Mammary epithelial cell (primary cell): ENCODE measurements at regions of chr14 and their contacts with region 1.

Region 1: DNA sequence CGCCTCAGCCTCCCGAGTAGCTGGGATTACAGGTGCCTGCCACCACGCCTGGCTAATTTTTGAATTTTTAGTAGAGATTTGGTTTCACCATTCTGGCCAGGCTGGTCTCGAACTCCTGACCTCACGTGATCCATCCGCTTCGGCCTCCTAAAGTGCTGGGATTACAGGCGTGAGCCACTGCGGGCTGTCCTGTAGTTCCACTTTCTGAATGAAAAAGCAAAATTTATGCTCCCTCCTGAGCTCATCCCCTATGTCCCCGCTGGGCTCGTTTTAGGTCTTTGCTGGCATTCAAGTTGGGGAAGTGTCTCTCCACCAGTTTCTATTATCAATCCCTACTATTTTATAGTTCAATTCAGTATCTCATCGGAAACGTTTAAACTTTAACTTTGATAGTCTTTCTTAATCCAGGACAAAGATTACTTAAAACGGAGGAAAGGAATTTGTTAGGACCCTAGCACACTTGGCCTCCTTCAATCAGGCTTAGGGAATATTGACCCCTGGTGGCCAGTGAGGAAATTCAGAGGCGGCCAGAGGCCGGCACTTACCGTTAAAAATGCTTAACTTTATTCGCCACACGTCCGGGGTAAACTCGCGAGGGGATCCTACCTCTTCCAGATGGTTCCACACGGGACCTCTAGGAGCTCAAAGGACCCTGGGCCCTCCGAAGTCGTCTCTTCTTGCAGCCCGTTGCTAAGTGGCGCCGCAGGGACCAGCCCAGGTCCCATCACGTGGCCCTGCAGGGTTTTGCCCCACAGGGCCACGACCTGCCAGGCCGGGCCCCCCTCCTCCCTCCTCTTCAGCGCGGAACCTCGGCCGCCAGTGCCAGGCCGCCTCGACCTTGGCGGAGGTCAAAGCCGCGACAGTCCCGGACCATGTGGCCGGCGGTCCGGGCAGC is 11.4 kb upstream of the DNAL1 start:
- DNase-seq: peak; percentile 46
- H3K4me3 ChIP-seq: peak overlapping the region; percentile 47 to 57 (median 53)
- H3K27ac ChIP-seq: no peak overlapping the region
- H3K4me1 ChIP-seq: peaks cover 13% of the 10 kb centered on the region
- H3K27me3 ChIP-seq: no peaks in the 10 kb centered on the region
- CTCF ChIP-seq: peak; percentile 86 to 91

Region 2: DNA sequence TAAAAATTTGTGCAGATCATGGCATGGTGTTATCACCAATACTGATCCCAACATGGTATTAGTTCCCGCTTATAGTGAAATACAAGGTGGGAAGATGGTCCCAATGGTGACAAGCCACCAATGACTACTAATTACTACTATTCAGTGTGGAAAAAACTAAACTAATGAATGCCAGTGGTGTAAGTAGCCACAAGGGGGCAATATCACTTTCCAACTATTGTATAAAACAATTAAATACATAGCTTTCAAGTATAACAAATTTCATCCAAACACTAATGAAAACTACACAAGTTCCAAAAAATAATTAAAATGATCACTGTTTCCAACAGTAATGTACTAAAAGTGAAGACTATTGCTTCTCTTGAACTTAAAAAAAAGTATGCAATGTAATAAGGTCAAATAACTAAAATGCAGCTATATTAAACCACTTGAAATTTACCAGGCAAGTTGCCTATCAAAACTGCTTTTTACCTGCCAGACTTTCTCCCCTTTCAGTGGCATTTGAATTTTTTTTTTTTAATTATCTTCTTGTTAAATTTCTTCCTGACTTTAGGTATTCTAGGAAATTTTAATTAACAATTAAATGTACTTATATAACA is 338.1 kb before region 1 on chr14:
- CTCF ChIA-PET with region 1: no interaction called
- dilution Hi-C with region 1: no loop called
- in situ Hi-C with region 1: loop called in 1 of 2 experiments (anchors 25 kb)
- intact Hi-C with region 1: loop called (anchors 1 kb)
- DNase-seq: peak; percentile 25
- H3K4me3 ChIP-seq: no peak overlapping the region
- H3K27ac ChIP-seq: no peak overlapping the region
- H3K4me1 ChIP-seq: no peaks in the 10 kb centered on the region
- H3K27me3 ChIP-seq: no peaks in the 10 kb centered on the region
- CTCF ChIP-seq: peak; percentile 66 to 82

Region 3: DNA sequence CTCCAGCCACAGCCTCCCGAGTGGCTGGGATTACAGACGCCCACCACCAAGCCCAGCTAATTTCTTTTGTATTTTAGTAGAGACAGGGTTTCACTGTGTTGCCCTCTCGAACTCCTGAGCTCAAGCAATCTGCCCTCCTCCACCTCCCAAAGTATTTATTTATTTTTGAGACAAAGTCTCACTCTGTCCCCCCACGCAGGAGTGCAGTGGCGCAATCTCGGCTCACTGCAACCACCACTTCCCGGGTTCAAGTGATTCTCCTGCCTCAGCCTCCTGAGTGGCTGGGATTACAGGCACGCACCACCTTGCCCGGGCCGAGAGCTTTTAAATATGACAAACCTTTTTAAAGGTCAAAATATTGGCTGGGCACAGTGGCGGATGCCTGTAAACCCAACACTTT is 189.6 kb before region 1 on chr14:
- CTCF ChIA-PET with region 1: no interaction called
- dilution Hi-C with region 1: no loop called
- in situ Hi-C with region 1: no loop called
- intact Hi-C with region 1: no loop called
- DNase-seq: no peak
- H3K4me3 ChIP-seq: no peak overlapping the region
- H3K27ac ChIP-seq: no peak overlapping the region
- H3K4me1 ChIP-seq: no peaks in the 10 kb centered on the region
- H3K27me3 ChIP-seq: no peaks in the 10 kb centered on the region
- CTCF ChIP-seq: no peak

Region 4: DNA sequence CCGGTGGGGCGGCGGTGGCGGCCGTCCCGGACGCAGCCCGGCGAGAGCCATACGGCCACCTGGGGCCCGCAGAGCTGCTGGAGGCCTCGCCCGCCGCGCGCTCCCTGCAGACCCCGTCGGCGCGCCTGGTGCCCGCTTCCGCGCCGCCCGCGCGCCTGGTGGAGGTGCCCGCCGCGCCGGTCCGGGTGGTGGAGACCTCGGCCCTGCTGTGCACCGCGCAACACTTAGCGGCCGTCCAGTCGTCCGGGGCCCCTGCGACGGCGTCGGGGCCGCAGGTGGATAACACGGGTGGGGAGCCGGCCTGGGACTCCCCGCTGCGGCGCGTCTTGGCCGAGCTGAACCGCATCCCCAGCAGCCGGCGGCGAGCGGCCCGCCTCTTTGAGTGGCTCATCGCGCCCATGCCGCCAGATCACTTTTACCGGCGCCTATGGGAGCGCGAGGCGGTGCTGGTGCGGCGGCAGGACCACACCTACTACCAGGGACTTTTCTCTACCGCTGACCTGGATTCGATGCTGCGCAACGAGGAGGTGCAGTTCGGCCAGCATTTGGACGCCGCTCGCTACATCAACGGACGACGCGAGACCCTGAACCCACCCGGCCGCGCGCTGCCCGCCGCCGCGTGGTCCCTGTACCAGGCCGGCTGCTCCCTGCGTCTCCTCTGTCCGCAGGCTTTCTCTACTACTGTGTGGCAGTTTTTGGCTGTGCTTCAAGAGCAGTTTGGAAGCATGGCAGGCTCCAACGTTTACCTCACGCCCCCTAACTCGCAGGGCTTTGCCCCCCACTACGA is 141.9 kb before region 1 on chr14:
- CTCF ChIA-PET with region 1: no interaction called
- dilution Hi-C with region 1: no loop called
- in situ Hi-C with region 1: no loop called
- intact Hi-C with region 1: loop called (anchors 5 kb)
- DNase-seq: peak; percentile 74
- H3K4me3 ChIP-seq: peak overlapping the region; percentile 72 to 80 (median 78)
- H3K27ac ChIP-seq: peak overlapping the region; percentile 70
- H3K4me1 ChIP-seq: peaks cover 30% of the 10 kb centered on the region
- H3K27me3 ChIP-seq: no peaks in the 10 kb centered on the region
- CTCF ChIP-seq: no peak

Region 5: GRCh38 chr14:73568381-73568781 is 65.0 kb before region 1 on chr14:
- CTCF ChIA-PET with region 1: no interaction called
- dilution Hi-C with region 1: no loop called
- in situ Hi-C with region 1: no loop called
- intact Hi-C with region 1: loop called (anchors 2 kb)
- DNase-seq: peak; percentile 50
- H3K4me3 ChIP-seq: peak overlapping the region; percentile 40 to 60 (median 56)
- H3K27ac ChIP-seq: peak overlapping the region; percentile 65
- H3K4me1 ChIP-seq: peaks cover 22% of the 10 kb centered on the region
- H3K27me3 ChIP-seq: no peaks in the 10 kb centered on the region
- CTCF ChIP-seq: no peak